Vagina (tissue), 2 donors: ENCODE measurements at regions of chr17 and their contacts with region 1.

Region 1: DNA sequence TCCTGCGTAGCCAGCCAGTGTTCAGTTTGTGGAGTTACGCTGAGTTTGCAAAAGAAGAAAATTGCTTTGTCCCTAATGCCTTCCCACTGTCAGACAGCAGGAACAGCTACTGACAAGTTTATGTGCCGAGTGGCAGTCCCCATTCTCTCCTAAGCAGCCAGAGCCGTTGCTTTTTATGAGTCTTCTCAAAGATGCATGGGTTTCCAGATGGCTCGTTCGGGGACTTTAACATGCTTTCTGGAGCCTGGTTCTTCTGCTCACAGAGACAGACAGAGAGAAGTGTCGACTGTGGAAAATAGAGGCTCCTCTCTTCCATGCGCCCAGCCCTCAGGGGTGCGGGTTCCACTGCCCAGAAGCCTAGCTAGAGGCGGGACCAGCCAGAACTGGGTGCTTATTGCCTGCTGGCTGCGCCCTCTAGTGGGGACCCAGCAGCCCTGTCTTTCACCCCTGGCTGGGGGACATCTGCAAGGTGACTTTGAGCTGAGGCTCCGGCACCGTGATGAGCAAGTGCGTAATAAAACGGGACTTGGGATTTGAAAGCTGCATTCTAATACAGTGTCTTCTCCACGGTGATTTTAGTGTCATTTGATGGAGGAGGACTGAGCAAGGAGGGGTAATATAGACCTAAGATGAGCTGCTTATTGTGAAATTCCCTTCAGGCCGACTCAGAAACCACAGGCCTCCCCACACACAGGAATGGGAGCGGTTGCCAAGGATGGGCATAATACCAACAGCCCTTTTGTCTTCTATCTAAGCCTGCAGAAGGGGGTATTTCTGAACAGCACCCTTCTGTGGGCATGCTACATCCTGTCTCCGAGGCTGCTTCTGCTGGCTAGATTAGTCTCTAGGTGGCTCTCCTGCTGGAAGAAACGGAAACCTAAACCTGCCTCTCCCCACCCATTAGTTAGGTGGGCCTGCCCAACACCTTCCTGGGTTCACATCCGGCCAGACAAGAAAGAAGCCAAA is 73.1 kb downstream of the CCDC182 start:
- DNase-seq: peak; percentile 86 to 95
- H3K4me3 ChIP-seq: no peak overlapping the region
- H3K27ac ChIP-seq: no peak overlapping the region
- H3K4me1 ChIP-seq: peaks cover 13% of the 10 kb centered on the region
- H3K27me3 ChIP-seq: no peaks in the 10 kb centered on the region
- CTCF ChIP-seq: peak; percentile 74 to 95 (median 85)
- POLR2A ChIP-seq: no peak

Region 2: DNA sequence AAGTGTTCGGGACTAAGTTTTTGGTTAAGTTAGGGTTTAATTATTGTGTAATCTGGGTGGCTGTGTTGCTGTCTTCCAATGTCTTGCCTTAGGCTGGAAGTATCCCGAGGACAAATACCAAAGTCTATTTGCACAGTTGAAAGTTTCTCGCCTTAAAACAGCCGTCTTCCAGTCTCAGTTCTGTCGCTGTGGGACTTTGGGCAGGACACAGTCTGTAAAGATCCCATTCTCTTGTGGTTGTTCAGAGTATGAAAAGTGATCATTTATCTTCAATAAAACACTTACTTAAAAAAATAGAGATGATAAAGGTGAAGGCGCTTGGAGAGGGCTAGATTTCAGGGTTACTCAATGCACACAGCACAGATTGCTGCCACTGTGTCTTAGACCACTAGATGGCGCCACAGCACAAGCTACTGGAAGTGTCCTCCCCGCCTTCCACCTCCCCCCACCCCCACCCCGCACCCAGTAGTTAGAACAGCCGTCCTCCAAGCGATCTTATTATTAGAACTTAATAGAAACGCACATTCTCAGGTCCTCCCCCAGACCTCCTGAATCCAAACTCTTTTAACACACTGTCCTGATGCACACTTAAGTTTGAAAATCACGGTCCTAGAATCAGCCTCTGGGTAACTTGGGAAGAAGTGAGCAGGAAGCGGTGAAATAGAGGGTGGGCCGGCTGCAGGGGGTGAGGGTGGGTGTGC is 541.0 kb before region 1 on chr17:
- intact Hi-C with region 1: loop called (anchors 10 kb)
- DNase-seq: no peak
- H3K4me3 ChIP-seq: no peak overlapping the region
- H3K27ac ChIP-seq: no peak overlapping the region
- H3K4me1 ChIP-seq: no peaks in the 10 kb centered on the region
- H3K27me3 ChIP-seq: no peaks in the 10 kb centered on the region
- CTCF ChIP-seq: peak; percentile 39 to 89 (median 52)
- POLR2A ChIP-seq: no peak

Region 3: GRCh38 chr17:57234751-57235117 is 437.2 kb before region 1 on chr17:
- intact Hi-C with region 1: loop called (anchors 10 kb)
- DNase-seq: no peak
- H3K4me3 ChIP-seq: no peak overlapping the region
- H3K27ac ChIP-seq: no peak overlapping the region
- H3K4me1 ChIP-seq: no peaks in the 10 kb centered on the region
- H3K27me3 ChIP-seq: no peaks in the 10 kb centered on the region
- CTCF ChIP-seq: no peak
- POLR2A ChIP-seq: no peak

Region 4: DNA sequence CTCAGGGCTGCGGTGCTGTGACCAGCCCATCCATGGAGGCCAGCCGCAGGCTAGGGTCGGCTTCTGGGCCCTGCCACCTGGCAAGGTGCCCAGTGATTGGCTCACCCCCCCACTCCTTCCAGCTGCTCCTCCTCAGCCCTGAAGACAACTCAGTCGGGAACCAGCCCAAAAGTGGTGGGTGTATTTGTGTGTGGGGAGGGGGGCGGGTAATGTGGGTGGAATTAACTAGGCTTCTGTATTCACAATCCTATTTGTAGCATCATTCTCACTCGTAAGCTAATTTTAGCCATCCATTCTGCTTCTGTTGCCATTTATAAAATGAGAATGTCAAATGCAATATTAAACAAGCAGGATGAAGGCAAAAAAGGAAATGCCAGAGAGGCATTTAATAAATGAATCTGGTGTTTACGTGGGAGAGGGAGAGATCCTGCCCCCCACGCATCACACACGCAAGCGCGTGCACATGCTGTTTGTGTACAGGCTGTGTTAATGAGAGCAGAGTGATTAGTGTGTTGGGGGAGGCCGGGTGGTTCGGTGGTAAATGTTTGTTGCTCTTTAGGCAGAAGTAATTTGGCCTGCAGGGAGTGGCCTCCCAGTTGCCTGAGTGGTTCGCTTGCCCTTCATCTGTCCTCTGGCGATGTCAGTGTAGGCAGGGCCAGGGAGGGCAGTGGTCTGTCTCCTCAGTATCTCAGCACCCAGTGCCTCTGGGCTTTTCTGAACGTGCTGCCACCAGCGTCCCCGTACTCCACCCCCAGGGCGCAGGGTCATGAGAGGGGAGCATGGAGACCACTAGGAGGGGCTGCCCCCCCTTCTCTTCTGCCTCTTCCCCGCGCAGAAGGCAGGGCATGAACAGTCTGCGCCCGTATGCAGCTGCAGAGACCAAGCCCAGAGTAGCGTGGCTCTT is 66.9 kb before region 1 on chr17:
- intact Hi-C with region 1: loop called (anchors 5 kb)
- DNase-seq: no peak
- H3K4me3 ChIP-seq: peak overlapping the region in 1 of 2 donors; percentile 29
- H3K27ac ChIP-seq: peak overlapping the region; percentile 51
- H3K4me1 ChIP-seq: peaks cover 37% of the 10 kb centered on the region
- H3K27me3 ChIP-seq: no peaks in the 10 kb centered on the region
- CTCF ChIP-seq: no peak
- POLR2A ChIP-seq: no peak

Region 5: GRCh38 chr17:57636985-57637665 is 34.8 kb before region 1 on chr17:
- intact Hi-C with region 1: no loop called
- DNase-seq: no peak
- H3K4me3 ChIP-seq: no peak overlapping the region
- H3K27ac ChIP-seq: no peak overlapping the region
- H3K4me1 ChIP-seq: no peaks in the 10 kb centered on the region
- H3K27me3 ChIP-seq: no peaks in the 10 kb centered on the region
- CTCF ChIP-seq: no peak
- POLR2A ChIP-seq: no peak

Region 6: DNA sequence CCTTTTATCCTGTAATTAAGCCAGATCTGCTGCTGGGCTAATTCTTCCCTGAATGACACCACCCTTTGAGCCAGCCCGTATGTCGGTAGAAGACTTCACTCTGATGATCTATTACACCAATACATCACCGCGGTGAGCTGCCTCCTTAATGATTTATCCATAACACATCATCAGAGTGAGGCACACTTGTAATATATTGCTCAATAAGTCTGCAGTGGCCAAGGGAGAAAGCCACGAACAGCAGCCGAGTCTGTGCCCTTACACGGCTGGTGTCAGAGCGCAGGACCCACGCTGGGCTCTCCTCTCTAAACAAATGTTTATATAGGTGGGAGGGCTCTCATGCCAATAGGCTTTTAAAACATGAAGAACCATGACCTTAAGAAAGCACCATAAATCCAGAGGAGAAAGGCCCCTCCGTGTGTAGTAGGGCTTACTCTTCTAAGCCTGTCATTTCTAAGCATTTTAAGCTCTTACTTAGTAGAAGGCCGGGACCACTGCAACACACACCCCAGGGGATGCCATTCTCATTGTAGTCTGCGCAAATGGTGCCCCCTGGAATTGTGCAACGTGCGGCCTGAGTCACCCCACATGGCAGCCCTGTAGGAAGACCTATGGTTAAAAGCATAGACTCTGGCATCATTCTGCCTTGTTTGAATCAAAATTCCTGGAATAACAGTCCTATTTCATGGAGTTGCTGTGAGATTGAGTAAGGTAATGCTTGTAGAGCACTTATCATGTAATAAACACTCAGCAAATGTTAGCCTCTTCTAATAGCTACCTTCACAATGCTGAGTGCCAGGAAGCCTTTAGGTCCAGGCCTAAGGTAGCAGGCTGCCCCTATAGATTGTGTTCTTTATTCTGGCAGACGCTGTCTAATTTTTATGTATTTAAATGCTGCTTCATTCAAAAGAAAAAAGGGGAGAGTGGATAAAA is 151.8 kb after region 1 on chr17:
- intact Hi-C with region 1: loop called (anchors 10 kb)
- DNase-seq: no peak
- H3K4me3 ChIP-seq: no peak overlapping the region
- H3K27ac ChIP-seq: no peak overlapping the region
- H3K4me1 ChIP-seq: no peaks in the 10 kb centered on the region
- H3K27me3 ChIP-seq: no peaks in the 10 kb centered on the region
- CTCF ChIP-seq: no peak
- POLR2A ChIP-seq: no peak